ENCODE measurements at regions of chr17 and their contacts with region 1.

Region 1: DNA sequence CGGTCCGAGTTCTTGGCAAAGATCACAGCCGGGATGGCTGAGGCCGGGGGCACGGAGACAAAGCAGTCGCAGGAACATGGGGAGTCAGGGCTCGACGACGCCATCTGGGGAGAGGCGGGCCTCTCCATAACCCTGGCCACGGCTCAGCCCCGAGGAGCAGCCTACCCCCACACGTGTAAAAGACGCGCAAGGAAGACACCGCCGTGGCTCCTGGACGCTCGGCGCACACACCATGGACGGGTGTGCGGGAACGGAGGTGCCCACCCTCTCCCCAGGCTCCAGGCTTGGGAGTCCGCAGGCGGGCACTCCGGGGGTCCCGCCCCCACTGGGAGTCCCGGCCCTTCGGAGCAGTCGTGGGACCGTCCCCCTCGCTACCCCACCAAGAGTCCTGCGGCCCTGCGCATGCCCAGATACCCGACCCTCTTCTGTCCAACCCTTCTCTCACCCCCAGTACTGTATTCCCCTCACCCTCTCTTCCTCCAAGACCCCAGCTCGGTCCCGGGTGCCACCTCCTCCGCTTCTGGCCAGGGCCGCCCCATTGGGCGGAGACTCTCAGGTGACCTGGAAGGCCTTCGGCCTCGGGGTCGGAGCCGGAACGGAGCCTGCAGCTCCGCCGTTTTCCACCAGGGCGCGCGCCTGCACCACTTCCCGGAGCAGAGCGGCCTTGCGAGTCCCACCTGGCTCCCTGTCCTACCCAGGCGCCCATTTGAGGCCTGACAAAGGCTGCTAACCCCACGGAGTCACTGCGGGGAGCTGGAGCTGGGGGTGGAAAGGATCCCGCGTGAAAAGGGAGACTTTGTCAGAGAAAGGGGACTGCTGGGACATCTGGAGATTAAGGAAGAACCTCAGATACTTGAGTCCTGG is at the start of gene SCRN2:
- DNase-seq: peak; percentile 77 to 98 (median 87)

Region 2: DNA sequence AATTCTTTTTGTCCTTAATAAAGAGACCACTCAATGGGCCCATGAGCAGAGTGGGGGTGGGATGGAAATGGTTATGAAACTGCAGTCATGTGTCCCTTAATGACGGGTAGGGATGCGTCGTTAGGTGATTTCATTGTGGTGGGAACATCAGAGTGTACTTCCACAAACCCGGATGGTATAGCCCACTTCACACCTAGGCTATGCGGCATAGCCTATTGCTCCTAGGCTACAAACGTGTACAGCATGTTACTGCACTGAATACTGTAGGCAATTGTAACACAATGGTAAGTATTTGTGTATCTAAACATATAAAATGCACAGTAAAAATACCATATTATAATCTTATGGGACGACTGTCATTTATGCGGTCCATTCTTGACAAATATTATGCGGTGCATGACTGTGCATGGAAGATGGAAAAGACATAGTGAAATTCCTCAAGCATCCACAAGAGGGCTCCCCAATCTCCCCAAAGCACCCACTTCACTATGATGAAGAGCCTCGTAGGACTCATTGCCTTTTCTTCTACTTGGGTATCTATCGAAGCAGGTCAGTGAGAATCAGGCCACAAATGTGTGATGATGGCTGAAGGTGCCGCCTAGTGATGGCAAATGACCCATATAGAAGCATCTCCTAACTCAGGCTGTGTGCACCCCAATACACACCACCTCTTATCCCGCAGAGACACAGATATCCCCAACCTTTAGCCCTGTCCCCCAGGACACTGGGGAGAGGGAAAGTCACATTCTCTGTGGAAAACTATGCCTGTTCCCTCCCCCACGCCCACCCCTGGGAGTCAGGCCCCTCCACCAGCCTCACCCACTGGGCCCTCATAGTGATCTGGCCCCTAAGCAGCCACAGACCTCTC is 64.4 kb before region 1 on chr17:
- intact Hi-C with region 1: no loop called
- DNase-seq: no peak

Region 3: GRCh38 chr17:47789611-47790561 is 51.1 kb before region 1 on chr17:
- intact Hi-C with region 1: no loop called
- DNase-seq: peak; percentile 23 to 94 (median 58)

Region 4: GRCh38 chr17:47802341-47803022 is 38.5 kb before region 1 on chr17:
- intact Hi-C with region 1: no loop called
- DNase-seq: peak in 6 of 10 donors; percentile 37 to 90 (median 52)

Region 5: DNA sequence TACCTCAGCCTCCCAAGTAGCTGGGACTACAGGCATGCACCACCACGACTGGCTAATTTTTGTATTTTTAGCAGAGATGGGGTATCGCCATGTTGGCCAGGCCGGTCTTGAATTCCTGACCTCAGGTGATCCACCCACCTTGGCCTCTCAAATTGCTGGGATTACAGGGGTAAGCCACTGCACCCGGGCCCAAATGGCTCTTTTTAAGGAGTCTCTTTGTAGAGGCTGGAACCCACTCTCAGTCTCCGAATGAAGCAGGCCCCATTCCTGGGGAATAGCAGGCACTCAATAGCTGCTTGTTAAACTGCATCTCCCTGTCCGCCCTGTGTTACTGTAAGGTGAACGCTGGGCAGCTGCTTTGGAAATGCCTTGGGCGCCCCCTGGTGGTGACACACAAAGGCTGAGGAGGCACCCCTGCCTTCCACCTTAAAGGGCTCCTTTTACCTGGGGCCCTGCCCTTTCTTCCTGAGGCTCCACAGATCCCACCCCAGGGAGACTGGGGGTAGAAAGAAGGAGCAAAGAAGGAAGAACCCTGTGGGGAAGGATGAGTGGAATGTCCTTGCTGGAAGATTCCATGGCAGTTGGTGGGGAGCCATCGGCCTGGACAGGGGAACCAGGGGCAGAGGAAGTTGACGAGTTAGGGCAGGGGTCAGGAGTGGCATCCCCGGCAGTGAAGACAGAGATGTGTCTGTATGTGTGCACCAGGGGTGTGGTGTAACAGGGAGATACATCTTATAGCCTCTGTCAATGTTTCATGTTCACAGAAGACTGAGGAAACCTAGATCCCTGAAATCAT is 49.0 kb after region 1 on chr17:
- intact Hi-C with region 1: loop called (anchors 1 kb)
- DNase-seq: peak; percentile 72 to 97 (median 90)

Region 6: GRCh38 chr17:47970704-47971463 is 129.9 kb after region 1 on chr17 and contains the start of gene CDK5RAP3:
- intact Hi-C with region 1: loop called (anchors 10 kb)
- DNase-seq: peak; percentile 99 to 100 (median 100)

Region 7: GRCh38 chr17:48024937-48025906 is 184.2 kb after region 1 on chr17:
- intact Hi-C with region 1: loop called (anchors 5 kb)
- DNase-seq: peak; percentile 97 to 100 (median 98)